Upper lobe of right lung (tissue), 1 donor: ENCODE measurements at regions of chr3 and their contacts with region 1.

Region 1: GRCh38 chr3:11053926-11054503 is 61.5 kb downstream of the SLC6A1 start:
- DNase-seq: no peak
- ATAC-seq: no peak
- H3K4me3 ChIP-seq: no peak overlapping the region
- H3K27ac ChIP-seq: no peak overlapping the region
- H3K4me1 ChIP-seq: no peaks in the 10 kb centered on the region
- H3K27me3 ChIP-seq: peaks cover 22% of the 10 kb centered on the region
- CTCF ChIP-seq: no peak

Region 2: GRCh38 chr3:10945683-10946287 is 108.2 kb before region 1 on chr3:
- intact Hi-C with region 1: loop called (anchors 2 kb)
- DNase-seq: peak; percentile 82
- ATAC-seq: peak; percentile 84
- H3K4me3 ChIP-seq: no peak overlapping the region
- H3K27ac ChIP-seq: no peak overlapping the region
- H3K4me1 ChIP-seq: no peaks in the 10 kb centered on the region
- H3K27me3 ChIP-seq: no peaks in the 10 kb centered on the region
- CTCF ChIP-seq: peak; percentile 83